ENCODE measurements at regions of chr5 and their contacts with region 1.

Region 1: GRCh38 chr5:74810915-74811314 is 43.9 kb downstream of the NSA2 start:
- DNase-seq: peak; percentile 94
- H3K4me3 ChIP-seq: no peak overlapping the region
- H3K27ac ChIP-seq: peak overlapping the region; percentile 59
- H3K4me1 ChIP-seq: peaks cover 16% of the 10 kb centered on the region
- H3K27me3 ChIP-seq: no peaks in the 10 kb centered on the region
- CTCF ChIP-seq: no peak

Region 2: DNA sequence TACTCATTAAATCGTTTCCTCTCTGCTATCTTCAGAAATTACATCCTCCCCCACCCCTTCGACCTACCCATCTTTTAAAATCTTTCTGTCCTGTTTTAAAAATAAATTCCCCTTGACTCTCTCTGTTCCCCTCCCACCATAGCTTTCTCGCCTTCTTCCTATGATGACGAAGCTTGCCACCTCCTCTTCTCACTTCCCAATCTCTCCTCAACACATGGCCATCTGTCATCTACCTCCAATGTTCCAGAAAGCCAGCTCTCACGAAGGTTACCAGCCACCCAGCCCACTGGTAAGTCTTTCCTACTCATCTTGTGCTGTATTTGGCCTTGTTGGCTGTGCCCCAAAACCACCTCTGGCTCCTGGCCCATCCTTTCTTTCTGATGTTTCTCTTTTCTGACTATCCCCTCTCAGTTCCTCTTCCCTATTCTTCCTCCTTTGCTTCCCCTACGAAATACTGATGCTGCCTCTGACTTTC is 516.6 kb before region 1 on chr5:
- CTCF ChIA-PET with region 1: no interaction called
- dilution Hi-C with region 1: no loop called
- in situ Hi-C with region 1: no loop called
- intact Hi-C with region 1: no loop called
- DNase-seq: no peak
- H3K4me3 ChIP-seq: no peak overlapping the region
- H3K27ac ChIP-seq: no peak overlapping the region
- H3K4me1 ChIP-seq: peaks cover 9% of the 10 kb centered on the region
- H3K27me3 ChIP-seq: no peaks in the 10 kb centered on the region
- CTCF ChIP-seq: no peak

Region 3: DNA sequence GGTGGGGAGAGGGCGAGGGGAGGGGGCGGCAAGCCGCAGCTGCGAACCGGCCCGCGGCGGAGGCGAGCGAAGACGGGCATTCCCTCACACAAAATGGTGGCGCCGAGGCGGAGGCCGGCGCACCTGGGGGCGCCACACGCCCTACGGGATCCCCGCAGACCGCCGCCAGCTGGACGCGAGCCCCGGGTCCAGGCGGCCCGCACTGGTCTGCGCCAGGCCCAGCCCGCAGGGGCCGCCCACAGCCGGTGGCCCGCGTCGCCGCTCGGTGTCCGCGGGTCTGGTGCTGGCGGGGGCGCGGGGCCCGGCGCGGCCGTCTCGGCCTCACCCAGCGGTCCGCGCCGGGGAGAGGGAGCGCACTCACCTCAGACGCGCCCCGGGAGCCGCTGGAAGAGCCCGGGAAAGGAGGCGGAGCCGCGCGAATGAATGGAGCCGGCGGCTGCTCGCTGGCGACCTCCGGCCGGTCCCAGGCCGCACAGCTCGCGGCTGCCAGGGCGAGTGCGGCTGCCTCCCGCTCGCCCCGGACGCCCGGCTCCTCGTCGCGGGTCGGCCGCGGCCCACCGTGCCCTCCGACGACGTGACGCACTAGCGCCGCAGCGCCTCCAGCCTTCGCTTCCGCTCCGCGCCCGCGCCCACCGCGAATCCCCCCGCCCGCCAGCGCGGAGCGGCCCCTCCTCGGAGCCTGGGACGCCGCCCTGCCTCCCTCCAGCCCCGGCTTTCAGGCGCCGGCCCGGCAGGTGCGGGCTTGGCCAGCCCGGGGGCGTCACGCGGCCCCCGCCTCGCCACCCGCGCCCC is 55.1 kb after region 1 on chr5 and contains the start of gene FAM169A:
- CTCF ChIA-PET with region 1: no interaction called
- dilution Hi-C with region 1: no loop called
- in situ Hi-C with region 1: no loop called
- intact Hi-C with region 1: loop called (anchors 5 kb)
- DNase-seq: peak; percentile 65
- H3K4me3 ChIP-seq: peak within 1 kb of the TSS; percentile 64 to 87 (median 77)
- H3K27ac ChIP-seq: peak within 1 kb of the TSS; percentile 60
- H3K4me1 ChIP-seq: peaks cover 36% of the 10 kb centered on the region
- H3K27me3 ChIP-seq: no peaks in the 10 kb centered on the region
- CTCF ChIP-seq: no peak
- total RNA-seq, gene FAM169A: 24.5 to 25.5 TPM

Region 4: GRCh38 chr5:74945561-74946165 is 134.7 kb after region 1 on chr5:
- CTCF ChIA-PET with region 1: no interaction called
- dilution Hi-C with region 1: no loop called
- in situ Hi-C with region 1: no loop called
- intact Hi-C with region 1: no loop called
- DNase-seq: no peak
- H3K4me3 ChIP-seq: no peak overlapping the region
- H3K27ac ChIP-seq: no peak overlapping the region
- H3K4me1 ChIP-seq: no peaks in the 10 kb centered on the region
- H3K27me3 ChIP-seq: no peaks in the 10 kb centered on the region
- CTCF ChIP-seq: no peak

Measured in mammary epithelial cell (primary cell).